MCF 10A (cell line): ENCODE measurements at regions of chr17 and their contacts with region 1.

Region 1: DNA sequence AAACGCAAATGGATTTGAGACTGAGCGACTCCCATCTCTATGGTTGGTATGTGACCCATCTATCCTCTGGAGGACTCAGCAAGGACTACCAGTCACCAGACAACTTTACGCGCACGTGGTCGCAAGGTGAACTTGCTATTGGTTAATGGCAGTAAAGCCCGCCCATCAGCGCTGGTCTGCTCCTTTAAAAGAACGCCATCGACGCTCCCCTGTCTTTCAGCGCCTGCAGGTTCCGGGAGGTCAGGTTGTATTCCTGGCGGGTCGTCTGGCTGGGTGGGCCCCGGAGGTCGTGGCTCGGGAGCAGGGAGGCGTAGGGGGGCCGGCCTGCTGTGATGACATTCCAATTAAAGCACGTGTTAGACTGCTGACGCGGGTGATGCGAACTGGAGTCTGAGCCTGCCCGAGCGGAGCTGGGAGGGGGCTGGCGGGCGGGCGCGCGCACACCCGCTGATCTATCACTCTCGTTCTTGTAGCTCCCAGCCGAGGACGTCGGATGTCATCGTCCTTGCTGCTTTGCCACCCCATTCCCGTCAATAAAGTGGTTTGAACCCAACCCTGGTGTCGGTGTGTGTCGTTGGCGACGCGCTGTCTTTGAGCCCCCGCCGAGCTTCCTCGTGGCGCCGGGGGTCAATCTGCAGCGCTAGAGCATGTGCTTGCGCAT is 15.9 kb upstream of the ERN1 start:
- DNase-seq: peak; percentile 99
- H3K4me3 Mint-ChIP-seq: no peak overlapping the region
- H3K27ac Mint-ChIP-seq: no peak overlapping the region
- H3K4me1 Mint-ChIP-seq: peaks cover 23% of the 10 kb centered on the region
- H3K27me3 Mint-ChIP-seq: no peaks in the 10 kb centered on the region
- CTCF ChIP-seq: no peak

Region 2: DNA sequence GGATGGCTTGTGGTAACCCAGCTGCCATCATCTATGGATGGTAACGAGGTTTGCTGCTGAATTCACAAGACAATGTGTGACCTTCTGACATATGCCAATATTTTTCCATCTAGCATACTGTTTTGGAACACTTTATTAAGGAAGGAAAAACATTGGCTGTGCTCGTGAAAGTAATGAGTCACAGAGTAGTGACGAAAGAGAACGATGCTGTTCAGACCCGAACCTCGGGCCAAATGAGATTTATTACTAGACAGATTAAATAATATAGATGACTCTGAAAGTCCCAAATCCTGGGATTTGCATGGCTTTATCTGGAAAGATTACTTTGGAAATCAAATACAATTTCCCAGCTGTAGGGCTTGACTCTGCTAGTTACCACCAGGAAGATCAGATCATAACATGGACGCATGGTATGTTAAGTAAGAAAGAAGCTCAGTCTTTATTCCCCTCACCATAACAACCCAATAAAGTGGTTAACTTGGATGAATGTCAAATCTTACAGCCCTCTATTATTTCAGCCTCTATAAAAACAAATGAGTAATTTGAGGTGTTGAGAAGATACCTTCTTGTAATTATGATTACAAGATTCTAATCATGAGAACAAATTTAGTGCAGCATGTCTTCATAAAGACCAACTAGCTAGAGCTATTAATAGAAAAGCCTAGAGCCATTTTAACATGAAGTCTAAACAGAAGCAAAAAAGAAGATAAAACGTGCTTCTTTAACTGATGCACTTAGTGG is 48.5 kb before region 1 on chr17:
- CTCF ChIA-PET with region 1: interaction called, 3 read pairs
- POLR2A ChIA-PET with region 1: interaction called, 20 read pairs
- intact Hi-C with region 1: no loop called
- DNase-seq: peak; percentile 76
- H3K4me3 Mint-ChIP-seq: peak overlapping the region; percentile 54
- H3K27ac Mint-ChIP-seq: peak overlapping the region; percentile 87
- H3K4me1 Mint-ChIP-seq: peaks cover 28% of the 10 kb centered on the region
- H3K27me3 Mint-ChIP-seq: no peaks in the 10 kb centered on the region
- CTCF ChIP-seq: no peak

Region 3: GRCh38 chr17:64107500-64108235 is 38.2 kb before region 1 on chr17:
- CTCF ChIA-PET with region 1: no interaction called
- POLR2A ChIA-PET with region 1: no interaction called
- intact Hi-C with region 1: no loop called
- DNase-seq: no peak
- H3K4me3 Mint-ChIP-seq: no peak overlapping the region
- H3K27ac Mint-ChIP-seq: no peak overlapping the region
- H3K4me1 Mint-ChIP-seq: peaks cover 30% of the 10 kb centered on the region
- H3K27me3 Mint-ChIP-seq: no peaks in the 10 kb centered on the region
- CTCF ChIP-seq: no peak

Region 4: GRCh38 chr17:64155751-64156544 is 10.1 kb after region 1 on chr17:
- CTCF ChIA-PET with region 1: no interaction called
- POLR2A ChIA-PET with region 1: interaction called, 24 read pairs
- intact Hi-C with region 1: no loop called
- DNase-seq: no peak
- H3K4me3 Mint-ChIP-seq: no peak overlapping the region
- H3K27ac Mint-ChIP-seq: no peak overlapping the region
- H3K4me1 Mint-ChIP-seq: no peaks in the 10 kb centered on the region
- H3K27me3 Mint-ChIP-seq: no peaks in the 10 kb centered on the region
- CTCF ChIP-seq: no peak

Region 5: DNA sequence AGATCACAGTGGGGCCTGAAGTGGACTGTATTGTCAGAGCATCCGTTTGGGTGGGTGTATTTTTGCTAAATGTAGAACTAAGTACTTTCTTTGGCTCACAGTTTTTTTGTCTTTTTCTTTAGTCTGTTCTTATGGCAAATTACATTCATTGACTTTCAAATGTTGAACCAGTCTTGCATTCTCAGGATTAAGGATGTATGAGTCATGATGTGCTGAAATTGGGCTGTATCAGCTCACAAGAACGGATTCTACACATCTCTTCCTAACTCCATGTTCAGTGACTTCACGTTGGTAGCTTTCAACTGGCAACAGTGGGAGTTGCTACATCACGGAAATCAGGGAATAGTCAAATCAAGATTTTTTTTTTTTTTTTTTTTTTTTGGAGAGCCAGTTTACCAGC is 50.7 kb after region 1 on chr17:
- CTCF ChIA-PET with region 1: interaction called, 7 read pairs
- POLR2A ChIA-PET with region 1: interaction called, 66 read pairs
- intact Hi-C with region 1: no loop called
- DNase-seq: peak; percentile 65
- H3K4me3 Mint-ChIP-seq: no peak overlapping the region
- H3K27ac Mint-ChIP-seq: no peak overlapping the region
- H3K4me1 Mint-ChIP-seq: peaks cover 30% of the 10 kb centered on the region
- H3K27me3 Mint-ChIP-seq: no peaks in the 10 kb centered on the region
- CTCF ChIP-seq: no peak

Region 6: DNA sequence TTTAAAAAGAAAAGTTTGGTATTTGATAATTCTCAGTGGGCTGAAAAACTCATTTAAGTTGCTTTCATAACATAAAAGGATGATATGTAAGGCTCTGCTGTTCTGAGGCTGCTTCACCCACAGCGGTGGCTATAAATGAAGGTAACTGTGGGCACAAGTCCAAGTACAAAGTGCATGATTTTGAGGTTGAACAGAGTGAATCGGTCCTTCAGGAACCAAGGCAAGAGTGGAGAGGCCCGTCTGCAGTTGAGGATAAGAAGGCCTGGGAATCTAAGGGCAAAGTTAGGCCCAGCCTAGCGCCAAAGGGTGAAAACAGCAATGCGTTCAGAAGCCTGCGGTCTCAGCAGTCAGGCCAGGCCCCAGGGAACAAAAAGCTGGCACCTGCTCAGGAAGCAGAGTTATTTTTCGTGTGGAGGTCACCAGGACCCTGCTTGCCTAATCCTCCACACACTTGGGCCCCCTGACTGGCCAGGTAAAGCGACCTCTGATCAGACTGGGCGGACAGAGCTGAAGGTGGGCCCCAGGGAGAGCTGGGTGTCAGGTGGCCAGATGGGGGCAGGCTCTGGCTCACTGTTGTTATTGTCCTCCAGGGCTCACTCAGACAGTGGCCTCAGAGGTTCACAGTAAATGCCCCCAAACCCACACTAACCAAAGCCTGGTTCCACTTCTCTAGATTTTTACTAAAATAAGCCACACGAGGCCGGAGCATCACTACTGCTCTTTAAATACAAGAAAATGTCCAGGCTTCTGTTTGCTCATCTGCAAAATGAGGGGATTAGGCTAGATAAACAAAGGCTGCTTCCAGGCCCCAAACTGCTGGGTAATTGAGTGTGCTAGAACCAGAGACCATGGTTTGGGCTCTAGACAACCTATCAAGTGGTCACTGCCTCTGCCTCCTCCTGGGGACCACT is 70.7 kb after region 1 on chr17:
- CTCF ChIA-PET with region 1: interaction called, 3 read pairs
- POLR2A ChIA-PET with region 1: interaction called, 51 read pairs
- intact Hi-C with region 1: no loop called
- DNase-seq: peak; percentile 43
- H3K4me3 Mint-ChIP-seq: no peak overlapping the region
- H3K27ac Mint-ChIP-seq: peak overlapping the region; percentile 89
- H3K4me1 Mint-ChIP-seq: peaks cover 38% of the 10 kb centered on the region
- H3K27me3 Mint-ChIP-seq: no peaks in the 10 kb centered on the region
- CTCF ChIP-seq: no peak

Region 7: DNA sequence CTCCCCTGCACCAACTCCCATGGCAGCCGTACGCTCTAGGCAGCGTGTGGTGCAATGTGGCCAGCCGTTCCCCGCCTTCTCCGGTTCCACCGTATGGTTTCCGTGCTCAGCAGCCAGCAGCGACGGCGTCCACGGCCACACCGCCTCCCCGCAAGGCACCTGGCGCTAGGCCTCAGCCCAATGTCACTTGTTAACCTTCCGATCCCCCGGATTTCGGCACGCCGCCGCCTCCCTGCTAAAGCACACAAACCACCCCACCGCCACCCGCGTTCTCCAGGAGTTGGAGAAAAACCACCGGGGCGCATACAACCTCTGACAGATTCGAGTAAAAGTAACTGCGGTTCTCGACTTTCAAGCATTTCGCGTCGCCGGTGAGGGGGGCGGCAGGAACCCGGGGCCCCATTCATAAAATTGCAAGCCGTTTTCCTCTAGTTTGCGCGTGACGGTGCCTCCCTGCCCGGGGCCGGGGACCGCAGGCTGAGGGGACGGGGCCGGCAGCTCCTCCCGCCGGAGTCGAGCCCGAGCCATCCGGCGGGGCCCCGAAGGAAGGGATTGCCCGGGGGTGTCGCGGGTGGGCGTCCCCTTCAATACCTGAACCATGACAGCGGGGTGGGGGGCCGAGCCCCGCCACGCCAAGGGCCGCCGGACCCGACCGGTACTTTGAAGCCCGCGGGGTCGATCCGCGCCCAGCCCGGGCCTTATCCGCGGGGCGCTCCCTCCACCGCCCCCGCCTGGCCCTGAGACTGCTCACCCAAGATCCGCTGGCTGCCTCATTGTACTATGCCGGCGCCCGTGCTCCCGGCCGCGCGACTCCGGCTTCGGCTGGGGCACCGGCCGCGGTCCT is 116.8 kb after region 1 on chr17 and contains the start of gene TEX2:
- CTCF ChIA-PET with region 1: interaction called, 4 read pairs
- POLR2A ChIA-PET with region 1: interaction called, 90 read pairs
- intact Hi-C with region 1: loop called (anchors 1 kb)
- DNase-seq: peak; percentile 38
- H3K4me3 Mint-ChIP-seq: peak within 1 kb of the TSS; percentile 84
- H3K27ac Mint-ChIP-seq: peak within 1 kb of the TSS; percentile 36
- H3K4me1 Mint-ChIP-seq: peaks cover 24% of the 10 kb centered on the region
- H3K27me3 Mint-ChIP-seq: no peaks in the 10 kb centered on the region
- CTCF ChIP-seq: no peak
- total RNA-seq, gene TEX2: 33.7 and 42.2 TPM in 2 replicates